ENCODE measurements at regions of chr13 and their contacts with region 1.

Region 1: GRCh38 chr13:95834134-95834765 is 157.3 kb downstream of the DNAJC3 start:
- DNase-seq: peak; percentile 71 to 87 (median 80)
- H3K4me3 ChIP-seq: no peak overlapping the region
- H3K27ac ChIP-seq: no peak overlapping the region
- H3K4me1 ChIP-seq: peaks cover 0 to 3% (median 0%) of the 10 kb centered on the region in 4 experiments
- H3K27me3 ChIP-seq: no peaks in the 10 kb centered on the region

Region 2: DNA sequence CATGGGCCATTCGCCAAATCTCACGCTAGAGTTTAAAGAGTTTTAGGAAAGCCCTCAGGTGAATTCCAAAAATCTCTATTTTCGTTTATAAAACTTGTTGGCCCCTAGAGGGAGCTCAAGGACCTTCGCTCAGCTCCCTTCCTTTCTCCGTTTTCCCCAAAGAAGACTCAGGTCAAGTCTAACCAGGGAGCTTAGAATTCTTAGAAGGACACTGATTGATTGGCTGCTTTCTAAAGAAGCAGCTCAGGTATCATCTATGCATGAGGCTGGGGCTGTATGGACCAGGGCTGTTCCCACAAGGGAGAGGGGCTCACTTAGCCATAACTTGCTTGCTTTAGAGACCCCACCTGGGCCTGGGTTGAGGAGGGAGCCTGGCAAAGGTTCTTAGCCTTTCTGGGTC is 210.2 kb before region 1 on chr13:
- CTCF ChIA-PET with region 1: interaction called, 73 read pairs
- POLR2A ChIA-PET with region 1: no interaction called
- DNase-seq: peak; percentile 49 to 73 (median 68)
- H3K4me3 ChIP-seq: no peak overlapping the region
- H3K27ac ChIP-seq: no peak overlapping the region
- H3K4me1 ChIP-seq: peaks cover 0 to 19% (median 9%) of the 10 kb centered on the region in 4 experiments
- H3K27me3 ChIP-seq: no peaks in the 10 kb centered on the region

Region 3: GRCh38 chr13:95800436-95800835 is 33.8 kb before region 1 on chr13:
- CTCF ChIA-PET with region 1: no interaction called
- POLR2A ChIA-PET with region 1: no interaction called
- DNase-seq: no peak
- H3K4me3 ChIP-seq: no peak overlapping the region
- H3K27ac ChIP-seq: no peak overlapping the region
- H3K4me1 ChIP-seq: no peaks in the 10 kb centered on the region
- H3K27me3 ChIP-seq: no peaks in the 10 kb centered on the region

Region 4: GRCh38 chr13:95813139-95813538 is 21.1 kb before region 1 on chr13:
- CTCF ChIA-PET with region 1: interaction called, 24 read pairs
- POLR2A ChIA-PET with region 1: no interaction called
- DNase-seq: no peak
- H3K4me3 ChIP-seq: no peak overlapping the region
- H3K27ac ChIP-seq: no peak overlapping the region
- H3K4me1 ChIP-seq: no peaks in the 10 kb centered on the region
- H3K27me3 ChIP-seq: no peaks in the 10 kb centered on the region

Region 5: DNA sequence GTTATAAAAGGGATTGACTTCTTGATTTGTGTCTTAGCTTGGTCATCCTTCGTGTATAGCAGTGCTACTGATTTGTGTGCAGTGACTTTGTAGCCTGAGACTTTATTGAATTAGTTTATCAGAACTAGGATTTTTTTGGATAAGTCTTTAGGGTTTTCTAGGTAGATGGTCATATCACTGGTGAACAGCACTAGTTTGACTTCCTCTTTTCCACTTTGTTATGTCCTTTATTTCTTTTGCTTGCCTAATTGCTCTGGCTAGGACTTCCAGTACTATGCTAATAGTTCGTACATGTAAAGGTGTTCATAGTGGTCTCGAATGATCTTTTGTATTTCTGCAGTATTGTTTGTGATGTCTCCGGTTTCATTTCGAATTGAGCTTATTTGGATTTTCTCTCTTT is 11.9 kb before region 1 on chr13:
- CTCF ChIA-PET with region 1: interaction called, 25 read pairs
- POLR2A ChIA-PET with region 1: no interaction called
- DNase-seq: no peak
- H3K4me3 ChIP-seq: no peak overlapping the region
- H3K27ac ChIP-seq: no peak overlapping the region
- H3K4me1 ChIP-seq: no peaks in the 10 kb centered on the region
- H3K27me3 ChIP-seq: no peaks in the 10 kb centered on the region